BJ (cell line): ENCODE measurements at regions of chr10 and their contacts with region 1.

Region 1: DNA sequence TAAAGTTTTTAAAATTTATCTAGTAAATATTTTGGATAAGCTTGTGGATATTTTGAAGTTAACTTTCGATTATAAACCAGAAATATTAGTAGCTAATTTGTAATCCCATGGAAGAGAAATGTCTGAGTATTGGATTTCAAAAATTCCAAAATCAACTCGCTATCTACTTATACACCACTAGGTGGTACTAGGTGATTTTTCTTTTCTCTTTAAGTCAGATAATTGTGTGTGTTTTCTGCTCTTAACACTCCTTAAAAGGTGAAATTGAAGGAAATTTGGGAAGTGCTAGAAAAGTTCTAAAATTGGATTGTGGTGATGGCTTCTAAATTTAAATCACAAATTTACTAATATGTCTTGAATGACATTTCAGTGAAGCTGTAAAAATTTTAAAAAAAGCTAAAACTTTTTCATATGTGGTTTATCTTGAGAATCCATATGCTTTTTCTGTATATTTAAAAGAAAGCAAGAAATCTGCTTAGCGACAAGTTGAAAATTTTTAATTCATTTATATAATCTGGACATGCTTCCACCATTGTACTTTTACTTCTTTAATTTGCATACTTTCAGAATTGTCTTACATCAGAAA is 90.2 kb downstream of the IPMK start:
- DNase-seq: no peak
- H3K4me3 ChIP-seq: no peak overlapping the region
- H3K27me3 ChIP-seq: no peaks in the 10 kb centered on the region
- CTCF ChIP-seq: peak; percentile 54

Region 2: GRCh38 chr10:58189269-58189668 is 11.8 kb after region 1 on chr10:
- CTCF ChIA-PET with region 1: interaction called, 12 read pairs
- POLR2A ChIA-PET with region 1: no interaction called
- DNase-seq: peak; percentile 40
- H3K4me3 ChIP-seq: no peak overlapping the region
- H3K27me3 ChIP-seq: no peaks in the 10 kb centered on the region
- CTCF ChIP-seq: no peak

Region 3: GRCh38 chr10:58451193-58451889 is 273.9 kb after region 1 on chr10:
- CTCF ChIA-PET with region 1: no interaction called
- POLR2A ChIA-PET with region 1: no interaction called
- DNase-seq: no peak
- H3K4me3 ChIP-seq: no peak overlapping the region
- H3K27me3 ChIP-seq: no peaks in the 10 kb centered on the region
- CTCF ChIP-seq: no peak